ENCODE measurements at regions of chr12 and their contacts with region 1.

Region 1: DNA sequence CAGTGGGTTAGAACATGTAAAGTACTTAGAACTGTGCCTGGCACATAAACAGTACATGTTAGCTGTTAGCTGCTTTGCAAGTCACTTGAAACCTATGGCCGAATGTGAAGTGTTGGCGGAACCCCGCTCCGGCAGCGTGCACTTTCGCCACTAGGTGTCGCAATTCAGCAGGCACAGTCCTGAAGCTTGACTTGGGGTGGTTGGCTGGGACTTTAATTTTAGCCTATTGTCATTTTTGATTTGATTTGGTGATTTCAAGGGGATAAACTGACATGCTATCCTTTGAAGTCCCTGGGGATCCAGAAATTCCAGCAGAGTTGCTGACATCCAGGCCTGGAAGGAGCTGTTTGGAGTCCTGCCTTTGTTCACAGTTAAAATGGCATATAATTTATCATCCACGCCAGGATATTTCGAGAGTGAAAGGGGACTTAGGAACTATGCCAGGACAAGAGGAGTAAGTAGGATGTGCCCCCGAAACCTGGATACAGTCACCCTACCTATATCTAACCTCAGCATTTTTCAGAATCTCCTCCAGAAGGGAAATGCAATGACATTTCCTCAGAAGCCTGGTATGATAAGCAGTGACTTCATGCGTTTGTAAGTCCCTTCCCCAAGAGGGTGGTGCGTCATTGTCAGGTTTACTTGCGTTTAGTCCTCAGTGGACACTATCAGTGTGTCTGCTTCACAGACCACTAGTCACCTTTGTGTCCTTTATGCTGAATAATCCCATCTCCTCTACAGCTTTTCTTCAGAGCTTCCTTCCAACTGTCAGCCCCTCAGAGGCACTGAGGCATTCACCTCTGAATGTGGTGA is 3.5 kb upstream of the TSPAN9 start:
- DNase-seq: peak; percentile 87
- H3K4me3 ChIP-seq: no peak overlapping the region
- H3K27ac ChIP-seq: no peak overlapping the region
- H3K4me1 ChIP-seq: no peaks in the 10 kb centered on the region
- H3K27me3 ChIP-seq: no peaks in the 10 kb centered on the region
- CTCF ChIP-seq: peak; percentile 99

Region 2: GRCh38 chr12:3202734-3203446 is 129.2 kb after region 1 on chr12:
- intact Hi-C with region 1: loop called (anchors 5 kb)
- DNase-seq: peak; percentile 65
- H3K4me3 ChIP-seq: no peak overlapping the region
- H3K27ac ChIP-seq: no peak overlapping the region
- H3K4me1 ChIP-seq: peaks cover 3% of the 10 kb centered on the region
- H3K27me3 ChIP-seq: peaks cover 24% of the 10 kb centered on the region
- CTCF ChIP-seq: peak; percentile 88

Region 3: GRCh38 chr12:3275171-3276041 is 201.8 kb after region 1 on chr12:
- intact Hi-C with region 1: loop called (anchors 5 kb)
- DNase-seq: peak; percentile 73
- H3K4me3 ChIP-seq: no peak overlapping the region
- H3K27ac ChIP-seq: no peak overlapping the region
- H3K4me1 ChIP-seq: no peaks in the 10 kb centered on the region
- H3K27me3 ChIP-seq: no peaks in the 10 kb centered on the region
- CTCF ChIP-seq: peak; percentile 96

Measured in colonic mucosa (tissue), 4 donors.